B cell (primary cell): ENCODE measurements at regions of chr14 and their contacts with region 1.

Region 1: DNA sequence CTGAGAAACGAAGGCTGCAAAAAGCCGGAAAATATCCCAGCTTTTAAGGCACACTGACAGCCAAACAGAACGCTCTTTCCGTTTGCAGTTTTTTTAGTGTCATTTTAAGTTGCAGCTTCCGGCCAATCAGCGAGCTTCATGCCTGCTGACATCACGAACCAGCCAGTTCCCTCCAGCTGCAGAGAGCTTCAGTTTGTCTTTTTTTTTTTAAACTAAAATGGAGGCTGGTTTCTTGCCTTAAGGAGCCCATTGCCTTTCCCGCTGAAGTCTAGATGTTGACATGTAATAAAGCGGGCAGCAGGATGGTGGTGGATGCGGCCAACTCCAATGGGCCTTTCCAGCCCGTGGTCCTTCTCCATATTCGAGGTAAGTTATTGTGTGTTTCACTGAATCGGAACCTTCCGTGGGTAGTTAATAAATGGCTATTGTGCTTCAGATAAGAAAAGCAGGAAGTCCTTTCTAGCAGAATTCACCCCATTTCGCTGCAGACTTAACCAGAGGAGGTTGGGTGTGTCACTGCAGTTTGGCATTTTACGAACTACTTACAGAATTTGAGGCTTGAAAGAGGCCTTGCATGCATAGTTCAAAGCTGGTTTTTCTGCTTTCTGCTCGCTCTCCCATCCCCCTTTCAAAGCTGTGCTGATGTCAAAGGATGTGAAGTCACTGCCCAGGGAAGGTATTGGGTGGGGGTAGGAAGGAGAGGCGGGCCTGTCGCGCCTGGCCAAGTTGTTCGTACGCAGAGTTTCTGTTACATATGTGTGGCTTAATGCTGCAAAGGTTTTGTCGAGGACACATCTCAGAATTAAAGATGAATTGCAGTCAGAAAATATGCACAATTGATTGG is 48.4 kb downstream of the PPP2R5C start:
- DNase-seq: peak; percentile 93
- ATAC-seq: peak; percentile 93
- H3K4me3 ChIP-seq: peak overlapping the region; percentile 80 to 100 (median 97)
- H3K4me3 Mint-ChIP-seq: peak overlapping the region; percentile 92
- H3K27ac ChIP-seq: peak overlapping the region; percentile 95 to 100
- H3K27ac Mint-ChIP-seq: peak overlapping the region; percentile 98
- H3K4me1 ChIP-seq: peaks cover 39 to 43% of the 10 kb centered on the region in 2 donors
- H3K4me1 Mint-ChIP-seq: peaks cover 45% of the 10 kb centered on the region
- H3K27me3 ChIP-seq: no peaks in the 10 kb centered on the region
- H3K27me3 Mint-ChIP-seq: no peaks in the 10 kb centered on the region
- CTCF ChIP-seq: no peak

Region 2: DNA sequence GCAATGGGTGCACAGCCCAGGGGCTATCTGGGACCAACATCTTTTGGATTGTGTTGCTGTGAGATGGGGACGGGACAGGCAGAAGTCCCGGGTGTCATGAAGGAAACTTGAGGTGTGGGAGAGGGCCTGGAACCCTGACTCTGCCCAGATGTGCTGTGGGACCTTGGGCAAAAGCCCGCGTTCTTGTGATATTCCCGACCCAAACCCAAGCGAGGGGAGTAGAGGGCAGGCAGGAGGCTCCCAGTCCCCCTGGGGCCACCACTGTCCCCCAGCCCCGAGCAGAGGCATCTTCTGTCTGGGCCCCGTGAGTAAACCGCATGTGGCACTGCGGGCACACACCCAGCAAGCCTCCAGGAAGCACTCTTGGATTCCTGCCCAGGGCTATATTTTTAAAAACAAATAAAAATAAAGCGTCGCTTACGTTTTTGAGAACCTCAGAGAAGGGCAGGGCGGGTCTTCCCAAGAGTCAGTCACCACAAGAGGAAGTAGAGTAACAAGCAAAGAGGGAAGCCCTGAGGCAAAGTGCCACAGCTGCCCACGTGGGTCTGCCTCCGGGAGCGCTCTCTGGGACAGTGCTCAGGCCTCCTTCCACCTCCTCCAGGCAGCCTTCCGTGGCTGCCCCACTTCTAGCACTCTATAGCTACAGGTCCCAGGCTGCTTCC is 1262.1 kb before region 1 on chr14:
- CTCF ChIA-PET with region 1: no interaction called
- POLR2A ChIA-PET with region 1: no interaction called
- intact Hi-C with region 1: no loop called
- DNase-seq: peak; percentile 76
- ATAC-seq: no peak
- H3K4me3 ChIP-seq: peak overlapping the region in 3 of 5 experiments; percentile 5 to 80 (median 68)
- H3K4me3 Mint-ChIP-seq: peak overlapping the region; percentile 41
- H3K27ac ChIP-seq: peak overlapping the region in 1 of 2 donors; percentile 53
- H3K27ac Mint-ChIP-seq: no peak overlapping the region
- H3K4me1 ChIP-seq: peaks cover 19 to 25% of the 10 kb centered on the region in 2 donors
- H3K4me1 Mint-ChIP-seq: peaks cover 10% of the 10 kb centered on the region
- H3K27me3 ChIP-seq: no peaks in the 10 kb centered on the region
- H3K27me3 Mint-ChIP-seq: peaks cover 9% of the 10 kb centered on the region
- CTCF ChIP-seq: no peak

Region 3: DNA sequence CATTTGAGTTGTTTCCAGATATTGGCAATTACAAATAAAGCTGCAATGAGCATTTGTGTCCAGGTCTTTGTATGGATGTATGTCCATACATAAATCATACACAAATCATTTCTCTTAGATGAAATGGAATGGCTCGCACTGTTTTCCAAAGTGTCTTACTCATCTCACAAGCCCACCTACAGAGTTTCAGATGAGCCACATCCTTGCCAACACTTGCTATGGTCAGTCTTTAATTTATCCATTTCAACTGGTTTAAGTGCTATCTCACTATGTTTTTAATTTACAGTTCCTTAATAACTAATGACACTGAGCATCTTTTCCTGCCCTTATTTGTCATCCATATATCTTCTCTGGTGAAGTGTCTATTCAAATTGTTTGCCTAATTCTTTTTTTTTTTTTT is 381.5 kb before region 1 on chr14:
- CTCF ChIA-PET with region 1: no interaction called
- POLR2A ChIA-PET with region 1: no interaction called
- intact Hi-C with region 1: no loop called
- DNase-seq: no peak
- ATAC-seq: no peak
- H3K4me3 ChIP-seq: no peak overlapping the region
- H3K4me3 Mint-ChIP-seq: no peak overlapping the region
- H3K27ac ChIP-seq: no peak overlapping the region
- H3K27ac Mint-ChIP-seq: no peak overlapping the region
- H3K4me1 ChIP-seq: no peaks in the 10 kb centered on the region
- H3K4me1 Mint-ChIP-seq: no peaks in the 10 kb centered on the region
- H3K27me3 ChIP-seq: peaks cover 0 to 3% (median 1%) of the 10 kb centered on the region in 4 experiments
- H3K27me3 Mint-ChIP-seq: peaks cover 6% of the 10 kb centered on the region
- CTCF ChIP-seq: no peak

Region 4: GRCh38 chr14:101444116-101444515 is 365.8 kb before region 1 on chr14:
- CTCF ChIA-PET with region 1: no interaction called
- POLR2A ChIA-PET with region 1: no interaction called
- intact Hi-C with region 1: no loop called
- DNase-seq: no peak
- ATAC-seq: no peak
- H3K4me3 ChIP-seq: no peak overlapping the region
- H3K4me3 Mint-ChIP-seq: no peak overlapping the region
- H3K27ac ChIP-seq: no peak overlapping the region
- H3K27ac Mint-ChIP-seq: no peak overlapping the region
- H3K4me1 ChIP-seq: no peaks in the 10 kb centered on the region
- H3K4me1 Mint-ChIP-seq: no peaks in the 10 kb centered on the region
- H3K27me3 ChIP-seq: peaks cover 0 to 5% (median 0%) of the 10 kb centered on the region in 4 experiments
- H3K27me3 Mint-ChIP-seq: peaks cover 21% of the 10 kb centered on the region
- CTCF ChIP-seq: no peak

Region 5: GRCh38 chr14:101761032-101761880 is 48.6 kb before region 1 on chr14 and contains the start of gene PPP2R5C:
- CTCF ChIA-PET with region 1: interaction called, 4 read pairs
- POLR2A ChIA-PET with region 1: interaction called, 17 read pairs
- intact Hi-C with region 1: loop called (anchors 2 kb)
- DNase-seq: peak; percentile 93
- ATAC-seq: peak; percentile 63
- H3K4me3 ChIP-seq: peak within 1 kb of the TSS; percentile 73 to 96 (median 87)
- H3K4me3 Mint-ChIP-seq: peak within 1 kb of the TSS; percentile 94
- H3K27ac ChIP-seq: peak within 1 kb of the TSS; percentile 66 to 78
- H3K27ac Mint-ChIP-seq: peak within 1 kb of the TSS; percentile 92
- H3K4me1 ChIP-seq: peaks cover 11 to 12% of the 10 kb centered on the region in 2 donors
- H3K4me1 Mint-ChIP-seq: peaks cover 14% of the 10 kb centered on the region
- H3K27me3 ChIP-seq: no peaks in the 10 kb centered on the region
- H3K27me3 Mint-ChIP-seq: no peaks in the 10 kb centered on the region
- CTCF ChIP-seq: no peak
- total RNA-seq, gene PPP2R5C: 330 and 337 TPM in 2 replicates

Region 6: GRCh38 chr14:101774006-101774795 is 35.7 kb before region 1 on chr14:
- CTCF ChIA-PET with region 1: interaction called, 44 read pairs
- POLR2A ChIA-PET with region 1: interaction called, 7 read pairs
- intact Hi-C with region 1: no loop called
- DNase-seq: peak; percentile 70
- ATAC-seq: peak; percentile 66
- H3K4me3 ChIP-seq: no peak overlapping the region
- H3K4me3 Mint-ChIP-seq: peak overlapping the region; percentile 36
- H3K27ac ChIP-seq: peak overlapping the region; percentile 54 to 63
- H3K27ac Mint-ChIP-seq: peak overlapping the region; percentile 93
- H3K4me1 ChIP-seq: peaks cover 40 to 55% of the 10 kb centered on the region in 2 donors
- H3K4me1 Mint-ChIP-seq: peaks cover 57% of the 10 kb centered on the region
- H3K27me3 ChIP-seq: no peaks in the 10 kb centered on the region
- H3K27me3 Mint-ChIP-seq: no peaks in the 10 kb centered on the region
- CTCF ChIP-seq: no peak

Region 7: GRCh38 chr14:101781240-101782061 is 28.4 kb before region 1 on chr14:
- CTCF ChIA-PET with region 1: interaction called, 11 read pairs
- POLR2A ChIA-PET with region 1: interaction called, 5 read pairs
- intact Hi-C with region 1: loop called (anchors 2 kb)
- DNase-seq: peak; percentile 46
- ATAC-seq: peak; percentile 58
- H3K4me3 ChIP-seq: peak overlapping the region in 4 of 5 experiments; percentile 35 to 67 (median 60)
- H3K4me3 Mint-ChIP-seq: peak overlapping the region; percentile 79
- H3K27ac ChIP-seq: no peak overlapping the region
- H3K27ac Mint-ChIP-seq: peak overlapping the region; percentile 15
- H3K4me1 ChIP-seq: peaks cover 18 to 25% of the 10 kb centered on the region in 2 donors
- H3K4me1 Mint-ChIP-seq: peaks cover 39% of the 10 kb centered on the region
- H3K27me3 ChIP-seq: peaks cover 0 to 5% (median 2%) of the 10 kb centered on the region in 4 experiments
- H3K27me3 Mint-ChIP-seq: no peaks in the 10 kb centered on the region
- CTCF ChIP-seq: no peak

Region 8: GRCh38 chr14:101823511-101824120 is 13.7 kb after region 1 on chr14:
- CTCF ChIA-PET with region 1: interaction called, 53 read pairs
- POLR2A ChIA-PET with region 1: interaction called, 90 read pairs
- intact Hi-C with region 1: loop called (anchors 1 kb)
- DNase-seq: peak; percentile 55
- ATAC-seq: peak; percentile 28
- H3K4me3 ChIP-seq: peak overlapping the region in 4 of 5 experiments; percentile 20 to 58 (median 48)
- H3K4me3 Mint-ChIP-seq: peak overlapping the region; percentile 92
- H3K27ac ChIP-seq: peak overlapping the region; percentile 99 to 100
- H3K27ac Mint-ChIP-seq: peak overlapping the region; percentile 99
- H3K4me1 ChIP-seq: peaks cover 80 to 82% of the 10 kb centered on the region in 2 donors
- H3K4me1 Mint-ChIP-seq: peaks cover 88% of the 10 kb centered on the region
- H3K27me3 ChIP-seq: no peaks in the 10 kb centered on the region
- H3K27me3 Mint-ChIP-seq: no peaks in the 10 kb centered on the region
- CTCF ChIP-seq: no peak

Region 9: DNA sequence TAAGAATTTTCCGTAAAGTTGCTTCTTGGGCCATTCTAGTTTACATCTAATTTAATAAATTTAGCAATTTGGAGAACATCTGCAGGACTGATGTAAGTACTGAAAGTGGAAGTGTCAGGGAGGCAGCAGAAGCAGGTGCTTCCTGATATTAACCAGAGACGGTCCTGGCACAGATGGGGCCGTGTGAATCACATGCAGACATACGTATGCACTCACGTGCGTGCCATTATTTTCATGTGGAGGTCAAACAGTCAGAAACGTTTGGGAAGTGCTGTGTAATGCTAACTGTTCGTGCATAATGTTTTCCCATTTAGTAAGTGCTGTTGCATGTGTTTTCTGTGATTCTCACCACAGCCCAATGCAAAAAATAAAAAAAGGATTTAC is 66.7 kb after region 1 on chr14:
- CTCF ChIA-PET with region 1: interaction called, 3 read pairs
- POLR2A ChIA-PET with region 1: interaction called, 15 read pairs
- intact Hi-C with region 1: loop called (anchors 1 kb)
- DNase-seq: peak; percentile 96
- ATAC-seq: peak; percentile 89
- H3K4me3 ChIP-seq: peak overlapping the region in 4 of 5 experiments; percentile 8 to 57 (median 29)
- H3K4me3 Mint-ChIP-seq: peak overlapping the region; percentile 71
- H3K27ac ChIP-seq: peak overlapping the region; percentile 94 to 96
- H3K27ac Mint-ChIP-seq: peak overlapping the region; percentile 72
- H3K4me1 ChIP-seq: peaks cover 52 to 58% of the 10 kb centered on the region in 2 donors
- H3K4me1 Mint-ChIP-seq: peaks cover 79% of the 10 kb centered on the region
- H3K27me3 ChIP-seq: no peaks in the 10 kb centered on the region
- H3K27me3 Mint-ChIP-seq: no peaks in the 10 kb centered on the region
- CTCF ChIP-seq: no peak

Region 10: DNA sequence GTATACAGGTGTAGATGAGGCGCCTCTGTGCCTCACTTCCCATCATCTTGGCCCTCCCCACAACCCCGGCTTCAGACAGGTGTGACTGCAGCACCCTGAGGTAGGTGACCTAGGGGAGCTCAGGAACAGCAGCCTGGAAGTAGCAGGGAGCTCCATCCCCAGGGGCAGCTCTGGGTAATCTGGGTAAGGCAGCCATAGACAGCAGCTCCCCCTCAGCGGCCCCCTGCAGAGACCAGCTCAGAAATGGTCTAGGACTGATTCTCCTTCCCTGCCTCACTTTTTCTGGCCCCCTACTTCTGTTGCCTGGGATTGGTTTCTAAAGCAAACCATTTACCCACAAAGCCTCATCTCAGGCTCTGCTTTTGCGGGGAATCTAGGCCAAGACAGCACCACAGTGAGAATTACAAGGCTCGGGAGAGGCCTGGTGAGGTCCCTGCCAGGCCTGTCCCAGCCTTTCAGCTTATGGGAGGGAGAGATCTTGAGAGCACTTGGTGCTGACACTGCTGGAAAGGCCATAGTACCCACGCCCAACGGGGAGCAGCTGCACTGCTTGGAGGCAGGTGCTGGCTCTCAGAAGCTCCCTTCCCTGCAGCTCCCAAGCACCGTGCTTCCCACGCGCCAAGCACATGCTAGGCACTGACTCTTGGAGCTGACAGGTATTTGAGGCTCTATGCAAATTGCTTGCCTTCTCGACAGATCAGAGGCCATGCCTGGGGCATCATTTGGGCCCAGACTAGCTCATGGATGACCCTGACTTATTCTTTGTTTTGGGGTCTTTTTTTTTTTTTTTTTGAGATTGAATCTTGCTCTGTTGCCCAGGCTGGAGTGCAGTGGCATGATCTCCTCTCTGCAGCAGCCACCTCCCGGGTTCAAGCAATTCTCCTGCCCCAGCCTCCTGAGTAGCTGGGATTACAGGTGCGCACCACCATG is 922.2 kb after region 1 on chr14:
- CTCF ChIA-PET with region 1: no interaction called
- POLR2A ChIA-PET with region 1: no interaction called
- intact Hi-C with region 1: no loop called
- DNase-seq: no peak
- ATAC-seq: no peak
- H3K4me3 ChIP-seq: no peak overlapping the region
- H3K4me3 Mint-ChIP-seq: no peak overlapping the region
- H3K27ac ChIP-seq: no peak overlapping the region
- H3K27ac Mint-ChIP-seq: no peak overlapping the region
- H3K4me1 ChIP-seq: no peaks in the 10 kb centered on the region
- H3K4me1 Mint-ChIP-seq: no peaks in the 10 kb centered on the region
- H3K27me3 ChIP-seq: no peaks in the 10 kb centered on the region
- H3K27me3 Mint-ChIP-seq: no peaks in the 10 kb centered on the region
- CTCF ChIP-seq: no peak